Transverse colon (tissue), 4 donors: ENCODE measurements at regions of chr15 and their contacts with region 1.

Region 1: GRCh38 chr15:42920519-42921227 is at the start of gene TTBK2:
- DNase-seq: peak; percentile 99
- H3K4me3 ChIP-seq: peak within 1 kb of the TSS; percentile 85 to 99 (median 97)
- H3K27ac ChIP-seq: peak within 1 kb of the TSS; percentile 87 to 96 (median 93)
- H3K4me1 ChIP-seq: peaks cover 6 to 22% (median 9%) of the 10 kb centered on the region in 4 donors
- H3K27me3 ChIP-seq: no peaks in the 10 kb centered on the region
- CTCF ChIP-seq: peak in 3 of 5 experiments; percentile 18 to 43 (median 41)
- EP300 ChIP-seq: no peak
- POLR2A ChIP-seq: peak; percentile 79
- total RNA-seq, gene TTBK2: 7.9 to 78.2 (median 18.2) TPM

Region 2: DNA sequence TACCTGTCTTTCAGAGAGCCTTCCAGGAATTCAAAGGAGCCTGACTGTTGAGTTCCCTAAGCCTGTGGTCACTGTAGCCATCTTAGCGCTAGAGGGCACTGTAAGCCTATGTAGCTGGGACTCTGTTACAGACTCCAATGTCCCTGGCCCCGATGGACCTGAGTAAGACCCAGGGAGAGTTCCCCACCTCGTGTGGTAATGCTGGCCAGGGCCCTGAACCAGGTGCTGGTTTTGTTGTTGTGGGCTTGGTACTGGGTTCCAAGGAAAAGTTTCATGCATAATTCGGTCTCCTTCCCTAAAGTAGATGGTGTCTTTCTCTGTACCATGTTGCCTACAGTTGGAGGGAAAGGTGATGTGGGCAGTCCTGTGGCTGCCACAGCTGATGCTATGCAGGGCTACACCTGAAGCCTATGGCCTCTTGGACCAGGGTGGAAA is 216.2 kb before region 1 on chr15:
- in situ Hi-C with region 1: loop called in 3 of 4 experiments (anchors 10 kb)
- intact Hi-C with region 1: no loop called
- DNase-seq: peak; percentile 69
- H3K4me3 ChIP-seq: no peak overlapping the region
- H3K27ac ChIP-seq: no peak overlapping the region
- H3K4me1 ChIP-seq: peaks cover 0 to 4% (median 1%) of the 10 kb centered on the region in 4 donors
- H3K27me3 ChIP-seq: no peaks in the 10 kb centered on the region
- CTCF ChIP-seq: peak; percentile 65 to 77 (median 72)
- EP300 ChIP-seq: no peak
- POLR2A ChIP-seq: no peak

Region 3: GRCh38 chr15:42736793-42737528 is 183.7 kb before region 1 on chr15 and contains the start of gene CDAN1:
- in situ Hi-C with region 1: loop called in 3 of 4 experiments (anchors 10 to 25 kb)
- intact Hi-C with region 1: no loop called
- DNase-seq: peak; percentile 95
- H3K4me3 ChIP-seq: peak within 1 kb of the TSS; percentile 43 to 91 (median 85)
- H3K27ac ChIP-seq: peak within 1 kb of the TSS; percentile 91 to 95 (median 92)
- H3K4me1 ChIP-seq: peaks cover 0 to 18% (median 16%) of the 10 kb centered on the region in 4 donors
- H3K27me3 ChIP-seq: no peaks in the 10 kb centered on the region
- CTCF ChIP-seq: no peak
- EP300 ChIP-seq: no peak
- POLR2A ChIP-seq: peak; percentile 56
- total RNA-seq, gene CDAN1: 10.0 to 37.0 (median 13.6) TPM